Activated naive CD4-positive, alpha-beta T cell treated with anti-CD3 and anti-CD28 coated beads for 36 hours (primary cell): ENCODE measurements at regions of chr17 and their contacts with region 1.

Region 1: GRCh38 chr17:76271669-76272540 is 6.8 kb downstream of the UBALD2 start:
- DNase-seq: peak; percentile 97
- H3K4me3 Mint-ChIP-seq: peak overlapping the region; percentile 79
- H3K27ac Mint-ChIP-seq: peak overlapping the region; percentile 91
- H3K4me1 Mint-ChIP-seq: peaks cover 67% of the 10 kb centered on the region
- H3K27me3 Mint-ChIP-seq: no peaks in the 10 kb centered on the region

Region 2: GRCh38 chr17:76072148-76072858 is 199.6 kb before region 1 on chr17 and contains the start of gene SRP68:
- CTCF ChIA-PET with region 1: no interaction called
- intact Hi-C with region 1: loop called (anchors 2 kb)
- DNase-seq: peak; percentile 86
- H3K4me3 Mint-ChIP-seq: peak within 1 kb of the TSS; percentile 95
- H3K27ac Mint-ChIP-seq: peak within 1 kb of the TSS; percentile 98
- H3K4me1 Mint-ChIP-seq: peaks cover 49% of the 10 kb centered on the region
- H3K27me3 Mint-ChIP-seq: peaks cover 33% of the 10 kb centered on the region
- total RNA-seq, gene SRP68: 127 to 131 TPM

Region 3: DNA sequence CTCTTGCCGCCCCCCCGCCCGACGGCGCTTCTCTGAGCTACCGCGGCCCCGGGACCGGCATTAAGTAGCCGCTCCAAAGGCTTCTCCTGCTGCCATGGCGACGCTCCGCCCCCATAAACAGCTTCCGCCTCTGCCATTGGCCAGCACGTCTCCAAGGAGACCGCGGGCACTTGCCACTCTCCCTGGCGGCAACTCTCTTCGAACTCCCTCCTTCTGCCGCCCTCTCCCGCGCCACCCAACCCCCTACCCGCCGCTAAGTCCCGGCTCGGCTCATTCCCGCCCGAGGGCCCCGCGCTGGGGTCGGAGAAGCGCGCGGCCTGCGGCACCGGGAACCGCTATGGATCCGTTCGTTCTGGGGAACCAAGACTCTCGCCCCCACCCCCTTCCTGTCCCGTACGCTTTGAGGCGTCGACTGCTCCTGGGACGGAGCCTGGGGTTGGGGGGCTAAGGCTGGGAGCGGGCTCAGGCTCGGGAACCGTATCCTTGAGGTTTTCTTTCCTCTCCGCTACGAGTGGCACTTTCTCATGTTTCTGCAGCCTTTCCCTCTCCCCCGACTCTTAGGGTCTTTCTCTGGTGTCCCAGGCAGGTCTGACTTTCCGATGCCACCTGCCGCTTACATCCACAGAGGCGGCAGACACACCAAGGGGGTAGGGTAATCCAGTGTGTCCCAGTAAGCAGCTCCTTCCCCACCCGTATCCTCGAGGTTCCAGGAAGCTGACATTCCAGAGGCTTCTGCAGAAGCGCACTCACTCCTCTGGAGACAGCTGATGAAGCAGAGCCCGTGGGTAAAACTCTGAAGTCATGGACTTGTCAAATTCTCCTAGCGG is 130.5 kb before region 1 on chr17 and contains the start of gene FOXJ1:
- CTCF ChIA-PET with region 1: no interaction called
- intact Hi-C with region 1: loop called (anchors 2 kb)
- DNase-seq: peak; percentile 92
- H3K4me3 Mint-ChIP-seq: peak within 1 kb of the TSS; percentile 72
- H3K27ac Mint-ChIP-seq: no peak within 1 kb of the TSS
- H3K4me1 Mint-ChIP-seq: peaks cover 58% of the 10 kb centered on the region
- H3K27me3 Mint-ChIP-seq: peaks cover 2% of the 10 kb centered on the region
- total RNA-seq, gene FOXJ1: 0.60 to 0.84 TPM

Region 4: DNA sequence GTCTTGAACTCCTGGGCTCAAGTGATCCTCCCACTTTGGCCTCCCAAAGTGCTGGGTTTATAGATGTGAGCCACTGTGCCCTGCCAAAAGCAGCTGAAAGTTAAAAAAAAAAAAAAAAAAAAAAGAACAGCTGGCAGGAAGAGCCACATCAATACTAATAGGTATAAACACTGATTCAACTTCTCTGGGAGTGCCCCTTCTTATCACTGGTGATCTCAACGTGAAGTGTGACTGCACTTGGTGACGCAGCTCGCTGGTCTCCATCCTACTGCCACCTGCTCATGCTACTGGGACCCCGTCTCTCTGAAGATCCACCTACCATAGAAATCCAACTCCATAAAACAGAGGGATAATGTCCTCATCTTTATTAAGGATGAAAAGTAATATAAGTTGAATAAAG is 72.4 kb before region 1 on chr17:
- CTCF ChIA-PET with region 1: interaction called, 4 read pairs
- intact Hi-C with region 1: loop called (anchors 1 kb)
- DNase-seq: peak; percentile 87
- H3K4me3 Mint-ChIP-seq: no peak overlapping the region
- H3K27ac Mint-ChIP-seq: peak overlapping the region; percentile 91
- H3K4me1 Mint-ChIP-seq: peaks cover 74% of the 10 kb centered on the region
- H3K27me3 Mint-ChIP-seq: no peaks in the 10 kb centered on the region